ENCODE measurements at regions of chr1 and their contacts with region 1.

Region 1: DNA sequence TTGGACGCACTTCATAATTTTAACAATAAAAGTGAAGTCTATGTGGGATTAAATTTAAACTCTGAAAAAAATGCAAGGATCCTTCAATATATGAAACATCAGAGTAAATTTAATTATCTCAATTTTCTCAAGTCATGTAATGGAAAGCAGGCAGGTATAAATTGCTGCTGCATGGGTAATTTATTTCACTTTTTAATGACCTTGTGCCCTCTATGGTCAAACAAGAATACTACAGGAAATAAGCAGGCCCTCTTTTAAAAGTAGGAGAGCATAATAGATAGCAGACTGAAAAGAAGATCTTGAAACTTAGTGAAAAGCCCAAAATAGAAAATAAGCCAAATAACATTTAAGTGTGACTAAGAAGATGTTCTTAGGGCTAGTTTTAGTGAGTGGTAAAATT is 22.9 kb downstream of the BCAS2 start:
- DNase-seq: no peak
- ATAC-seq: no peak

Region 2: DNA sequence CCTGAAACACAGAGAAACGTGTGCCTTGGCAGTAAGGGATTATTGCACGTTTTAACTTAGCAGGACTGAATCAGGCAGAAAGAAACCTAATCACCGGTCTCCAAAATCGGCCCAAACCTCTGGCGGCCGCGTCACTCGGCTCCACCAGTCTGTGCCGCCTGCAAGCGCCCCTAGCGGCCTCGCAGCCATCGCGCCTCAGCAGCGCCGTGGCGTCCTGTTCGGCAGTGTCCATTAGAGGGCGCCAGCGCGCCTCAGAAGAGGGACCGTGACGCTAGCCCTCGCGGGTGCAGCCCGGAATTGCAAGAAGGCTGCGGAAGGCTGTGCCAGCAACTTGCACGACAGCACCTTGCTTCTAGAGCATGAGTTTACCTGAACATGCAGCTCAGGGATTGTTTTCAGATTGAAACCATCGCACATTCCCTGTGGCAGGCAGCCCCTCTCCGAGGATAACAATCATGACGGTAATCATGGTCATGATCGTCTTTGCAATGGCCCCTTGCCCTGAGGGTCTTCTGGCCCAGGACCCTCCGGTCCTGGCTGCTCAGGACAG is 212.0 kb before region 1 on chr1:
- intact Hi-C with region 1: loop called (anchors 10 kb)
- DNase-seq: peak; percentile 98
- ATAC-seq: peak; percentile 100

Region 3: GRCh38 chr1:114359750-114360149 is 198.8 kb before region 1 on chr1:
- intact Hi-C with region 1: no loop called
- DNase-seq: no peak
- ATAC-seq: no peak